ENCODE measurements at regions of chr19 and their contacts with region 1.

Region 1: GRCh38 chr19:1875646-1876495 is 9.4 kb downstream of the ABHD17A start:
- DNase-seq: peak; percentile 91
- H3K4me3 Mint-ChIP-seq: peak overlapping the region; percentile 99
- H3K27ac Mint-ChIP-seq: peak overlapping the region; percentile 91
- H3K4me1 Mint-ChIP-seq: peaks cover 7% of the 10 kb centered on the region
- H3K27me3 Mint-ChIP-seq: no peaks in the 10 kb centered on the region
- CTCF ChIP-seq: no peak

Region 2: GRCh38 chr19:1672038-1672768 is 203.7 kb before region 1 on chr19:
- CTCF ChIA-PET with region 1: no interaction called
- POLR2A ChIA-PET with region 1: no interaction called
- intact Hi-C with region 1: no loop called
- DNase-seq: peak; percentile 52
- H3K4me3 Mint-ChIP-seq: peak overlapping the region; percentile 56
- H3K27ac Mint-ChIP-seq: no peak overlapping the region
- H3K4me1 Mint-ChIP-seq: peaks cover 16% of the 10 kb centered on the region
- H3K27me3 Mint-ChIP-seq: peaks cover 38% of the 10 kb centered on the region
- CTCF ChIP-seq: peak; percentile 94

Region 3: DNA sequence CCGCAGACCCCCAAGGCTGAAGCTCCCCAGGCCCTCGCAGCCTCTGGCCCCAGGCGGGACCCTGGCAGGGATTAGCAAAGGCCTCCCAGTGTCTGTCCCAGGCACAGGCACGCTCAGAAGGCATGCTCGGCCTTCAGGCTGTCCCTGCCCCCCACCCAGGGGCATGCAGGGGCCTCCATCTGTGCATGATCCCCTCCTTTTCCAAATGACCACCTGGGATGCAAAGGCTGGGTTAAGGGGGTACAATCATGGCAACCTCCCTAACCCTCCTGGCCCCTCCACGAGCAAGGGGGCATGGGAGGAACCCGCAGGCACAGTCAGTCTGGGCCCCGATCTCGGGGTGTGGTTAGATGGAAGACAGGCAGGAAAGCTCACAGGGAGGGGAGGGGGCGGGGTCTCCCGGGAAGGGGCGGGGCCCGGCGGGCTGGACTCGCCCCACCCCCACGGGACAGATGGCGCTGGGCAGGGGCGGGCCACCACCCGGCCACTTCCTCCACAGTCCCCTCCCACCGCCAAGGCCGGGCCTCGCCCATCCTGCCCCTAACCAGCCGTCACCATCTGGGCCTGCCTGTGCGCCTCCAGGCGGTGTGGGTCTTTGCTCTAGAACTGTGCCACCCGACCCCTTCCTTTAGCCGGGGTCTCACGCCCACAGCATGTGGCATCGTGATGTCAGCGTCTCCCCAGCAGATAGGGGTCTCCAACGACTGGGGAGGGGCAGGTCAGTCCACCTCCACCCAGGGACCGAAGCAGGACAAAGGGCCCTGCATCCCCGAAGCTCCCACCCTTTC is 20.6 kb before region 1 on chr19:
- CTCF ChIA-PET with region 1: no interaction called
- POLR2A ChIA-PET with region 1: interaction called, 11 read pairs
- intact Hi-C with region 1: no loop called
- DNase-seq: peak; percentile 92
- H3K4me3 Mint-ChIP-seq: peak overlapping the region; percentile 71
- H3K27ac Mint-ChIP-seq: peak overlapping the region; percentile 57
- H3K4me1 Mint-ChIP-seq: peaks cover 12% of the 10 kb centered on the region
- H3K27me3 Mint-ChIP-seq: no peaks in the 10 kb centered on the region
- CTCF ChIP-seq: no peak

Region 4: DNA sequence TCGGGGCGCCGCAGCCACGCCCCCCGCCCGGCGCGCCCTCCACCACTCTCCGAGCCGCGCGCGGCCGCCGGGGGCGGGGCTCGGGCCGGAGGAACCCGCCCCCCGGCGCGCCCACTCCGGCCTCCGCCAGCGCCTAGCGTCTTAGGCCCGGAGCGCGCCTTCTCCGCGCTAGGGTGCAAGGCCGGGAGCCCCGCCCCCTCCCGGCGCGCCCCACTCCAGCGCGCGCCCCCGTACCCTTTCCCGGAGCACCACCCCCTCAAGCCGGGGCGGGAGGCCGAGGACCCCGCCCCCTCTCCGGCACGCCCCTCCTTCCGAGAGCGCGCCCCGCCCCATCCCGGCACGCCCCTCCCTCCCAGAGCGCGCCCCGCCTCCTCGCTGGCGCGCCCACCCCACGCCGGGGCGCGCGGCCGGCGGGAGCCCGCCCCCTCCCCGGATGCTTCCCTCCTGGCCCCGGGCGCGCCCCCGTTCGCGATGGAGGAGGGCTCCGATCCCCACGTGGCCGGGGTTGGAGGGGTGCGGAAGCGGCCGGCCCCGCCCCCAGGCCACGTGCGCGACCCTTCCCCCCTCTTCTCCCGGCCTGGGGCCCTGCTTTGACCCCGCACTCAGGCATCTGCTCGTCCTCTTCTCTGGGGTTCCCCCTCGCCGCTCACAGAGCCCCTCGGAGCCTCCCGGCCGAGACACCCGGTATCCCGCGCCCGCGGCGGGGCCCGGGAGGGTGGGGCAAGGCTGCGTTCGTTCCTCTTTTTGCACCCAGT is 12.0 kb before region 1 on chr19:
- CTCF ChIA-PET with region 1: interaction called, 11 read pairs
- POLR2A ChIA-PET with region 1: interaction called, 26 read pairs
- intact Hi-C with region 1: no loop called
- DNase-seq: peak; percentile 96
- H3K4me3 Mint-ChIP-seq: peak overlapping the region; percentile 74
- H3K27ac Mint-ChIP-seq: peak overlapping the region; percentile 67
- H3K4me1 Mint-ChIP-seq: peaks cover 5% of the 10 kb centered on the region
- H3K27me3 Mint-ChIP-seq: no peaks in the 10 kb centered on the region
- CTCF ChIP-seq: no peak

Region 5: DNA sequence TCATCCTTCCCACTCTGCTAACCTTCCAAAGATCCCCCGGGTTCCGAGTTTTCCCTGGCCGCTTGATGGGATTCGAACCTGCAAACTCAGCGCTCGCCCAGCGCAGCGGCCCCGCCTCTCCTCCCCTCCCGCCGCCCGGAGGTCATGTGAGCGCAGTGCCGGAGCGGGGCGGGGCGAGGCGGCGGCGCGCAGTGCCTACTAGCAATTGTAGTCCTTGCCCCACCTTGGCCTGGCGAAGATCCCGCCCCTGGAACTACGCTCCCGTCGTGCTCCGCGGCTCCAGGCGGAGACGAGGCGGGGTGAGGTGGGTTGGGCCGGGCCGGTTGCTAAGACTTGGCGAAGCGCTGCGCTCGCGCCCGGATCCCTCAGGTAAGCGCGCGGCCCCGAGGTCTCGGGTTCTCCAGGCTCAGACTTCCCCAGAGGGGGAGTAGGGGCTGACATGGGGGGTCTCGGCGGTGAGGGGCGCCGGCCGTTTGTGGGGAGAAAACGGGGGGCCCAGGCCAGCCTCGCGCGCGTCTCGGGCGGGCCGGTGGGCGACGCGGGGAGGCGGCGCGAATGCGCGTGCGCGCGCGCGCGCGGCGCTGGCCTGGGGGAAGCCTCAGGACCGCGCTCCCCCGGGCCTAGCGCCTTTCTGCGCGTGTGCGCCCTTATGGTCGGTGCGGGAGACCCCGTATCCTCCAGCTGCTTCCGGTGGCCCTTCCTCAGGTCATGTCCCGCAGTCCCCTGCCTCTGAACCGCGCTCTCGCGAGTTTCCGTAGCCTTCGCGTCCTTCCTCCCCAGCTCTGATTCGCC is 29.4 kb after region 1 on chr19 and contains the starts of genes ADAT3 and SCAMP4:
- CTCF ChIA-PET with region 1: no interaction called
- POLR2A ChIA-PET with region 1: interaction called, 3 read pairs
- intact Hi-C with region 1: loop called (anchors 5 kb)
- DNase-seq: peak; percentile 99
- H3K4me3 Mint-ChIP-seq: peak within 1 kb of the TSS; percentile 82
- H3K27ac Mint-ChIP-seq: peak within 1 kb of the TSS; percentile 93
- H3K4me1 Mint-ChIP-seq: peaks cover 3% of the 10 kb centered on the region
- H3K27me3 Mint-ChIP-seq: no peaks in the 10 kb centered on the region
- CTCF ChIP-seq: no peak
- total RNA-seq, gene ADAT3: 6.8 and 6.9 TPM in 2 replicates
- total RNA-seq, gene SCAMP4: 48.7 and 67.2 TPM in 2 replicates

Region 6: GRCh38 chr19:1942078-1942933 is 66.4 kb after region 1 on chr19:
- CTCF ChIA-PET with region 1: no interaction called
- POLR2A ChIA-PET with region 1: no interaction called
- intact Hi-C with region 1: no loop called
- DNase-seq: peak; percentile 78
- H3K4me3 Mint-ChIP-seq: peak overlapping the region; percentile 83
- H3K27ac Mint-ChIP-seq: peak overlapping the region; percentile 75
- H3K4me1 Mint-ChIP-seq: peaks cover 12% of the 10 kb centered on the region
- H3K27me3 Mint-ChIP-seq: no peaks in the 10 kb centered on the region
- CTCF ChIP-seq: no peak

Region 7: GRCh38 chr19:2123682-2124387 is 248.0 kb after region 1 on chr19:
- CTCF ChIA-PET with region 1: no interaction called
- POLR2A ChIA-PET with region 1: no interaction called
- intact Hi-C with region 1: no loop called
- DNase-seq: no peak
- H3K4me3 Mint-ChIP-seq: no peak overlapping the region
- H3K27ac Mint-ChIP-seq: no peak overlapping the region
- H3K4me1 Mint-ChIP-seq: no peaks in the 10 kb centered on the region
- H3K27me3 Mint-ChIP-seq: no peaks in the 10 kb centered on the region
- CTCF ChIP-seq: no peak